Naive thymus-derived CD8-positive, alpha-beta T cell (primary cell): ENCODE measurements at regions of chr17 and their contacts with region 1.

Region 1: DNA sequence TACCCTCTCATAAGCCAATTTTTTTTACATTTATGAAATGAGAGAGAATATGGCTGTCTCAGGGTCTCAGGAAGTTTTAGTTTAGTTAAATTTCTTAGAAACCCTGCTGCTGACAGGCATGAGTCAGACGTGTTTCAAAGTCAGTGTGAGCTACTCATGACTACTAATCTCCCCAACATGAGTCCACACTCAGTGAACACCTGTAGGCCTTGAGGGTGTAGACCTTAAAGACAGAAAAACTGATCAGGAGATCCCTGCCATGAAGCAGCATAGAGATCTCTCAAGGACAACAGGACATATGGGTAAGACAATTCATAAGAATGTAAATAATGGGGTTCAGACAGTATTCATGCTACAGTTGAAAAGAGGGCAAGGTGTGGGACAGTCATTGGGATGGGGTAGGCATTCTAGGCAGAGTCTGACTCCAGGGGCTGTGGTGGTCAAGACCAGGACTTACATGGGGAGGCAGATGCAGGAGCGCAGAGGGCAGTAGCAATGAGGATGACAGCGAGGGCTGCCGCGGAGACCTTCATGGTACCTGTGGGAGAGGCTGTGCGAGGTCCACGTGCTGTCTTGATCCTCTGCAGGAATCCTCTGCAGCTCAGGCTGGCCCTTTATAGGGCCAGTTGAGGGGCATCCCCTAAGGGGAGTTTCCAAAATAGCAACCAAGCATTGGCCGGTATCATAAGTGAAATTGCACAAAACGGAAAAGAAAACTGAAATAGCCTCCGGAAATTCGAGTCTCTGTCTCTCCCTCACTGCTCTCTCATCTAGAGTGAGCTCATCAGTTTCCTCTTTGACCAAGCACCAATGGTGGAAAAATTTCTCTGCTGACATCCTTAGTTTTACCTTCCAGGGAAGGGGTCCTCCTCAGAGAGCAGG is at the start of gene CCL5:
- DNase-seq: peak in 3 of 10 donors; percentile 6 to 43 (median 10)
- ATAC-seq: peak; percentile 29 to 73
- H3K4me3 Mint-ChIP-seq: peak within 1 kb of the TSS; percentile 17 to 95 (median 56)
- H3K27ac Mint-ChIP-seq: peak within 1 kb of the TSS in 7 of 10 donors; percentile 12 to 96 (median 74)
- H3K4me1 Mint-ChIP-seq: peaks cover 12 to 49% (median 28%) of the 10 kb centered on the region in 4 donors
- H3K27me3 Mint-ChIP-seq: no peaks in the 10 kb centered on the region
- polyA plus RNA-seq, gene CCL5: 41.5 to 1,286 (median 63.8) TPM

Region 2: GRCh38 chr17:35889818-35890763 is 10.1 kb after region 1 on chr17:
- POLR2A ChIA-PET with region 1: interaction called, 43 read pairs
- DNase-seq: no peak
- ATAC-seq: peak in 1 of 2 donors; percentile 26
- H3K4me3 Mint-ChIP-seq: peak overlapping the region in 4 of 10 donors; percentile 18 to 59 (median 42)
- H3K27ac Mint-ChIP-seq: peak overlapping the region; percentile 20 to 94 (median 65)
- H3K4me1 Mint-ChIP-seq: peaks cover 15 to 58% (median 45%) of the 10 kb centered on the region in 4 donors
- H3K27me3 Mint-ChIP-seq: peaks cover 0 to 2% (median 0%) of the 10 kb centered on the region in 5 donors

Region 3: GRCh38 chr17:35898283-35899070 is 18.5 kb after region 1 on chr17:
- POLR2A ChIA-PET with region 1: interaction called, 15 read pairs
- DNase-seq: peak in 3 of 10 donors; percentile 7 to 39 (median 11)
- ATAC-seq: peak; percentile 54 to 57
- H3K4me3 Mint-ChIP-seq: peak overlapping the region in 8 of 10 donors; percentile 30 to 71 (median 50)
- H3K27ac Mint-ChIP-seq: peak overlapping the region in 7 of 10 donors; percentile 23 to 92 (median 74)
- H3K4me1 Mint-ChIP-seq: peaks cover 20 to 80% (median 58%) of the 10 kb centered on the region in 4 donors
- H3K27me3 Mint-ChIP-seq: peaks cover 0 to 8% (median 0%) of the 10 kb centered on the region in 5 donors

Region 4: GRCh38 chr17:36095992-36096391 is 216.0 kb after region 1 on chr17:
- POLR2A ChIA-PET with region 1: no interaction called
- DNase-seq: no peak
- ATAC-seq: no peak
- H3K4me3 Mint-ChIP-seq: no peak overlapping the region
- H3K27ac Mint-ChIP-seq: no peak overlapping the region
- H3K4me1 Mint-ChIP-seq: peaks cover 0 to 62% (median 2%) of the 10 kb centered on the region in 4 donors
- H3K27me3 Mint-ChIP-seq: peaks cover 8 to 48% (median 20%) of the 10 kb centered on the region in 5 donors